AG04450 (cell line): ENCODE measurements at regions of chr16 and their contacts with region 1.

Region 1: DNA sequence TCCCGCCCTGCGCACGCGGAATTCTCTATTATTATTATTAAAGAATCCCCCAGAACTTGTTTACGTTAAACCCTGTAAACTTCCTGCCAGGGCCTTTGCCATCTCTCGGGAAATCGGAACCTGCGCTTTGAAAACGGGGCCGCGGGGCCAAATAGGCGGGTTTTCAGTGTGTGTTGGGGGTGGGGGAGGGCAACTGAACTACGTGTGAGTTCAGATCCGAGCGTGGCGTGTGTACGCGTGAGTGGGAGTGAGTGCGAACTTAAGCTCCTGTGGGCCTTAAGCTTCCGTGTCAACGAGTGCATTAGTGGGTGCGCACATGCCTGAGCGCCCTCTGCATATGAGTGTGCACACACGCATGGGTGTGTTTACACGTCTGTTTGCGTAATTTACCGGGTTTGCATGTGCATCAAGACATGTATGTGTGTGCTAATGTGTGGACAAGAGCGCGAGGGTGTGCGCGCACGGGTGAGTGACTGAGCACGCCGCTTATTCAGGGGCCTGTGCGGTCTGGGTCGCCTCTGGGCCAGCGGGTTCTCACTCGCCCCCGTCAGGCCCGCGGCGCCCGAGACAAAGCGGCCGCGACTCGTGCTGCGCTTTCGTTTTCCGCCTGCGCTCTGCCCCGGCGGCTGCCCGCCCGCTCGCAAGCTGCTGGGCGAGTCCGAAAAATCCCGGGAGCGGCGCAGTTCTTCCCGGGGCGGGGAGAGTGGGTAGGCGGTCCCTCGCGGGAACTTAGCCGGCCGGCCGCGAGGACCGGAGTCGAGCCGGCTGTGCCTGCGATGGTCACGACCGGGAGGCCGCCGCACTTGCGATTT is 1.2 kb upstream of the FOXF1 start:
- DNase-seq: peak; percentile 75
- H3K4me3 ChIP-seq: peak overlapping the region; percentile 95
- H3K27ac ChIP-seq: peak overlapping the region; percentile 97
- H3K27me3 ChIP-seq: no peaks in the 10 kb centered on the region
- CTCF ChIP-seq: 0 out of 2 replicates have a peak, but pooled peaks have one; percentile 7

Region 2: DNA sequence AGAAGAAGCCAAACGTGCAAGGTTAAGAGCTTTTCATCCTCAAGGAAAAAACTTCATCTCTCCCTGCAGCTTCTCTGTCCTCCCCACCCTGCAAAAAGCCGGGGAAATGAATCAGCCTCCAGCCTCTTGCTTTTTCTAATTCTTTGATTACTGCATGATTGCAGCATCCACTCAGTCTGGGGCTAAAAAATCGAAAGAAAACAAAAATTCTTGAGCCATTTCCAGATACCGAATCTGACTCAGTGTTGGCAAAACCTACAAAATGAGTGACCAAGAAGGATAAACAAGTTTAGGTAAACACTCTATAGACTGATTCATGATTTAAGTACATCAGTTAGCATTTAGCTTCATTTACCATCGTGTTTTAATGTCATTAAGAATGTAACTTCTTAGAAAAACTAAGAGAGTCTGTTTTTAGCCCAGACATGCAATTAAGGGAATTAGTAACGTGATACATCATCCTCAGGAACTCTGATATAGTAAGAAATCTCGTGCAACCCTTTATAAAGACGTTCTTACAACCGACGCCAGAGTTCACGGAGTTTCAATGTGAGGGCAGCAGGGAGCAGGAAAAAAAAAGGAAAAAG is 286.1 kb before region 1 on chr16:
- CTCF ChIA-PET with region 1: no interaction called
- POLR2A ChIA-PET with region 1: interaction called, 20 read pairs
- DNase-seq: peak; percentile 94
- H3K4me3 ChIP-seq: peak overlapping the region; percentile 80
- H3K27ac ChIP-seq: peak overlapping the region; percentile 99
- H3K27me3 ChIP-seq: no peaks in the 10 kb centered on the region
- CTCF ChIP-seq: peak; percentile 24; the same call in 1 of the 2 replicates

Region 3: DNA sequence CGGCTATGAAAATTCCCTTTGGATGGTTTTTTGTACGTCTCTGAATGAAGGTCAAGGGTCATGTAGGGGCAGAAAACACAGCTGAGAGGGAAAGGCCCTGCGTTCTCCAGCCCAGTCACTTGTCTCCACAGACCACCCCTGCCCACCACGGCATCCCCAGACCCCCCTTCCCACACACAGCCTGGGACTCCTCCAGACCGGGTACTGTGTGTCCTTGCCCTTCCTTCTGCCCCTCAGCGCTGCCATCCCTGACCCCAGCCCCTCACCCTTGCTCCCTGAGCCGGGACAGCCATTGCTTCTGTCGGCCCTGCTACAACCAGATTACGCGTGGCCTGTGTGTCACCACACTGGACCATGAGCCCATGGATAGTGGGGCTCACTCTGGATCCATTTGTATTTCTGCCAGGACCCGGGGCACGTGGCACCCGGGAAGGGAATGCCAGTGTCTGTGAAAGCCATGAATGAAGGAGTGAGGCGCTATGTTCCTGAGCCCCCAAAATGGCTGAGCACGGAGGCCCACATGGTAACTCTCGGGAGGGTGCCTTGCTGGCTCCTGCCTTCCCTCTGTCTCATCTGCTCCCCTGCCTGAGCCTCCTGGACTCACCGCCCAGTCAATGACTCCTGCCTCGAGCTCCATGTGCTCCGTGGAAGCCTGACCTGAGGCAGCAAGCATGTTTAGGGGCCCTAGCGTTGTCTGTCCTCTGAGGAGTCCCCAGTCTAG is 137.9 kb before region 1 on chr16:
- CTCF ChIA-PET with region 1: no interaction called
- POLR2A ChIA-PET with region 1: no interaction called
- DNase-seq: no peak
- H3K4me3 ChIP-seq: no peak overlapping the region
- H3K27ac ChIP-seq: no peak overlapping the region
- H3K27me3 ChIP-seq: no peaks in the 10 kb centered on the region
- CTCF ChIP-seq: no peak